IMR-90 (cell line): ENCODE measurements at regions of chr2 and their contacts with region 1.

Region 1: GRCh38 chr2:172813314-172813888 is 77.8 kb downstream of the RAPGEF4 start:
- DNase-seq: peak; percentile 50
- ATAC-seq: peak; percentile 72
- H3K4me3 ChIP-seq: no peak overlapping the region
- H3K27ac ChIP-seq: no peak overlapping the region
- H3K4me1 ChIP-seq: no peaks in the 10 kb centered on the region
- H3K27me3 ChIP-seq: no peaks in the 10 kb centered on the region
- CTCF ChIP-seq: peak; percentile 66
- POLR2A ChIP-seq: no peak
- RAD21 ChIP-seq: peak; percentile 71

Region 2: DNA sequence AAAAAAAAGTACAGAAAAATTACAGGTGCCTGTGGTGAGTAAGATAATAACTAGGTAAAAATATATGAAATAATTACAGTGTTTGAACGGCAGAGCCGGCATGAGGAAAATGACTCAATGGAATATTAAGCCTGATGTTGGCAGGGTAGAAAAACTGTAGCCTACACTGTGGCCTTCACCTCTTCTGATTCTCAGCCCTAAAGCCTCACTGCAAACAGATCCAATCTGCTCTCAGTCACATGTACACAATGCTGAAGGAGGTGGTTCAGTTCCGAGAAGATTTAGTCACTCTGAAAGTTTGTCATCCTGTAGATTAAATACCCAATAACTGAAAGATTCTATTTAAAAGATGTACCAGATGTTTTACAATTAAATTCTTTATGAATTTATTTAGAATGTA is 195.4 kb after region 1 on chr2:
- CTCF ChIA-PET with region 1: no interaction called
- POLR2A ChIA-PET with region 1: no interaction called
- dilution Hi-C with region 1: no loop called
- in situ Hi-C with region 1: no loop called
- intact Hi-C with region 1: no loop called
- DNase-seq: no peak
- ATAC-seq: no peak
- H3K4me3 ChIP-seq: no peak overlapping the region
- H3K27ac ChIP-seq: no peak overlapping the region
- H3K4me1 ChIP-seq: peaks cover 3% of the 10 kb centered on the region; the same call in 1 of the 2 replicates
- H3K27me3 ChIP-seq: no peaks in the 10 kb centered on the region
- CTCF ChIP-seq: no peak
- POLR2A ChIP-seq: no peak
- RAD21 ChIP-seq: no peak

Region 3: GRCh38 chr2:173218326-173219056 is 405.1 kb after region 1 on chr2:
- CTCF ChIA-PET with region 1: no interaction called
- POLR2A ChIA-PET with region 1: no interaction called
- dilution Hi-C with region 1: no loop called
- in situ Hi-C with region 1: loop called (anchors 5 kb)
- intact Hi-C with region 1: loop called (anchors 5 kb)
- DNase-seq: peak; percentile 24
- ATAC-seq: peak; percentile 50
- H3K4me3 ChIP-seq: no peak overlapping the region
- H3K27ac ChIP-seq: peak overlapping the region; percentile 58; the same call in 1 of the 2 replicates
- H3K4me1 ChIP-seq: peaks cover 15% of the 10 kb centered on the region
- H3K27me3 ChIP-seq: no peaks in the 10 kb centered on the region
- CTCF ChIP-seq: no peak
- POLR2A ChIP-seq: no peak
- RAD21 ChIP-seq: no peak